Activated CD4-positive, alpha-beta T cell treated with anti-CD3 and anti-CD28 coated beads for 36 hours (primary cell): ENCODE measurements at regions of chr3 and their contacts with region 1.

Region 1: GRCh38 chr3:49856181-49857005 is at the start of gene TRAIP:
- DNase-seq: peak; percentile 97
- ATAC-seq: peak; percentile 99
- H3K4me3 Mint-ChIP-seq: peak within 1 kb of the TSS; percentile 97
- H3K27ac Mint-ChIP-seq: peak within 1 kb of the TSS; percentile 81
- H3K4me1 Mint-ChIP-seq: peaks cover 10% of the 10 kb centered on the region
- H3K27me3 Mint-ChIP-seq: no peaks in the 10 kb centered on the region
- total RNA-seq, gene TRAIP: 25.1 to 28.1 TPM

Region 2: DNA sequence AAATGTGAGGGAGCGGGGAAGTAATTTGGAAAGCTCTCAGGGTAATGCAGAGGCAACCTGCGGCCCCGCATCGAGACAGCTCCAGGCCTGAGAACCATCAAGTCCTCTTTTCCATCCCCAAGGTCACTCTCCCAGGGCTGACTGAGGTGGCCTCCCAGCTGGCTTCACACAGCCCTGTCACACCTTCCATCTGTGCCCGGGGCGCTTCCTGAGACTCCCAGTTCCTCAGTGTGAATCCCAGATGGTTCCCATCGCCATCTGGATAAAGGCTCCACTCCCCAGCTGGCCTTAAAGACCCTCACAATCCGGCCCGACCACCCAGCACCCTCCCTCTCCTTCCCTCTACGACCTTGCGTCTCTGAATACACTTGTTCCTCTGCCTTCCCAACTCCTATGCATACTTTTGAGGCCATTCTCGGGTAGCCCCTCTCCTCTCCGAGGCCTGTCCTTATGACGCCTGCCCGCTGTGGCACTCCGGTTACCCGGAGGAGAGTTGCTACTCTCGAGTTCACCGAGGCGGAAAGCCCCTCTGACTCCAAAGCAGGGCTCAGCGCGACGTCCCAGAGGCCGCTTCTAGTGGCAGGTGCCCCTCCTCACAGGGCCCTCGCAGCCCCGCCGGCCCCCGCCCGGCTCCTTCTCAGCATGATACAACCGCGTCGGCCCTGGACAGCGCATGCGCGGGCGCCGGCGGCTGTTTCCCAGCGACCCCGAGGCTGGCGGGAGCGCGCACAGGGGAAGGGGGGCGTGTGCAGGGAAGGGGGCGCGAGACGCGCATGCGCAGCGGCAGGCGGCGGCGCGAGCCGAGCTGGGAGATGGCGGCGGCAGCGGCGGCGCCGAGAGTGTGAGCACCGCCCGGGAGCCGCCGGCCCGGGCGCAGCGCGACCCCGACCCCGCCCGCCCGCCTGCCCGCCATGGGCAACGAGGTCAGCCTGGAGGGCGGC is 302.4 kb before region 1 on chr3 and contains the start of gene BSN:
- CTCF ChIA-PET with region 1: no interaction called
- POLR2A ChIA-PET with region 1: no interaction called
- intact Hi-C with region 1: loop called in 1 of 2 experiments (anchors 1 kb)
- DNase-seq: peak; percentile 95
- ATAC-seq: peak; percentile 92
- H3K4me3 Mint-ChIP-seq: peak within 1 kb of the TSS; percentile 72
- H3K27ac Mint-ChIP-seq: peak within 1 kb of the TSS; percentile 24
- H3K4me1 Mint-ChIP-seq: peaks cover 11% of the 10 kb centered on the region
- H3K27me3 Mint-ChIP-seq: peaks cover 34% of the 10 kb centered on the region
- total RNA-seq, gene BSN: 0.09 to 0.11 TPM

Region 3: GRCh38 chr3:49786241-49786958 is 70.0 kb before region 1 on chr3 and contains the start of gene IP6K1:
- CTCF ChIA-PET with region 1: no interaction called
- POLR2A ChIA-PET with region 1: no interaction called
- intact Hi-C with region 1: loop called (anchors 1 to 5 kb)
- DNase-seq: peak; percentile 100
- ATAC-seq: peak; percentile 100
- H3K4me3 Mint-ChIP-seq: peak within 1 kb of the TSS; percentile 90
- H3K27ac Mint-ChIP-seq: peak within 1 kb of the TSS; percentile 96
- H3K4me1 Mint-ChIP-seq: peaks cover 37% of the 10 kb centered on the region
- H3K27me3 Mint-ChIP-seq: no peaks in the 10 kb centered on the region
- total RNA-seq, gene IP6K1: 29.1 to 31.0 TPM

Region 4: DNA sequence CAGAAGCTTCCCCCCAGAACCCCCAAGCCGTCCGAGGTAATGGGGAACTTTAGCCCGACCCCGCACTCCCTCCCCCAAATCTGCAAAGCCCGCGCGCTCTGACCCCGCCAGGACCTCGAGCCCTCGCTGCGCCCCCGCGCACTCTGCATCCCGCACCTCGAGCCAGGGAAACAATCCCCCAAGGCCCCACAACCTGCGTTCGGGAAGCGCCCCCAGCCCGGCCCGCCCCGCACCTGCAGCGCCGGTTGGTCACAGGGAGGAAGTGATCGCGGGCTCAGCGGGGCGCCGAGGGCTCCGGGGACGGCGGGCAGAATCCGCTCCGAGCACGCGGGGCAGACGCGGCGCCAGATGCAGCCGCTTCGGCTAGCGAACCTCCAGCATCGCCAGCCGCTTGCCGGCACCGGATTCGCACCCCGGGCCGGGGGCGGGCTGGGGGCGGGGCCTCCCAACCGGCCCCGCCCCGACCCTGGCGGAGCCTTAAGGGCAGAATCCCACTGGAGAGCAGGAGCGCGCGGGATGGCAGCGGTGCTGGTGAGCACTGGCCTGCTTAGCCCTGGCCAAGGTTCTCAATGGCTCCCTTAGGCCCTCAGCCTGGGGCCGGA is 13.2 kb after region 1 on chr3 and contains the start of gene CAMKV:
- CTCF ChIA-PET with region 1: no interaction called
- POLR2A ChIA-PET with region 1: no interaction called
- intact Hi-C with region 1: loop called in 1 of 2 experiments (anchors 1 kb)
- DNase-seq: peak; percentile 61
- ATAC-seq: peak; percentile 59
- H3K4me3 Mint-ChIP-seq: no peak within 1 kb of the TSS
- H3K27ac Mint-ChIP-seq: no peak within 1 kb of the TSS
- H3K4me1 Mint-ChIP-seq: no peaks in the 10 kb centered on the region
- H3K27me3 Mint-ChIP-seq: peaks cover 29% of the 10 kb centered on the region
- total RNA-seq, gene CAMKV: 1.1 to 1.3 TPM

Region 5: DNA sequence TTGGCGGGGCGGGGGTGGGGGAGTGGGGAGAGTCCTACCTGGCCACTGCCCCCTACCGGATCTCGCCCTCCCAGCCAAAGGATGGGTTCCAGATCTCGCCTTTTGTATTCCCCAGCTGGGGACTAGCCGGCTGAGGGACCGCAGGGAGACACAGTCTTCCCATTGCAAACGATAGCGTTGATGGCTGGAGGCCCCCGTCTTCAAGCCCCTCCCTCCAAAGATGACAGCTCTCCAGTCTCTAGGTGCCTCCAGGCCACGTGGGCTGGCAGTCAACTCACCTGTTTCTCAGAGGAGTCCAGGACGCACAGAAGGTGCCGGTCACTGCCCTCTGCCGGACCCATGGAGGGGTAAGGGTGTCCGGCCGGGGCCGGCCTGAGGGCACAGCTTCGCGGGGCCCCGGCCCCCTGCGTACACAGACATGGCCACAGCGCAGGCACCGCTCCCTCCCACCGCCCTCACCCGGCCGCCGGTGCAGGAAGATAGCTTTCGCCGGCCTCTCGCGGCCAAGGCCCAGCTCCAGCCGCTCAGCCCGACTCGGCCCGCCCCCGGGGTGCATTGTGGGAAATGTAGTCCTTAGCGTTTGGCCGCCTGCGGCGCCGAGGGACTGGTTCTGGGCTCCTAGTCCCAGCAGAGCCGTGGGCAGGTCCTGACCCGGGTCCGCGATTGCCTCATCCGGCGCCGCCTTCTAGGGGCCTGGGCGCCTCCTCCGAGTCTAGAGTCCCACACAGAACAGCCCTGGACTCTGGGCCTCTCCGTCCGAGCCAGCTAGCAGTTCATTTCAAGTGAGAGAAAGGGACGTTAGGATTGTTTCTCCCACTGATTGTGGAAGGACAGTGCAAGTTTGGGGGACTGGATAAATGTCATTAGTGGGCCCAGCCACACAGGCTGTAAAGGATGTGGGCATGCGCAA is 73.2 kb after region 1 on chr3 and contains the start of gene MON1A:
- CTCF ChIA-PET with region 1: no interaction called
- POLR2A ChIA-PET with region 1: no interaction called
- intact Hi-C with region 1: loop called in 1 of 2 experiments (anchors 1 kb)
- DNase-seq: peak; percentile 92
- ATAC-seq: peak; percentile 97
- H3K4me3 Mint-ChIP-seq: peak within 1 kb of the TSS; percentile 85
- H3K27ac Mint-ChIP-seq: peak within 1 kb of the TSS; percentile 90
- H3K4me1 Mint-ChIP-seq: peaks cover 19% of the 10 kb centered on the region
- H3K27me3 Mint-ChIP-seq: no peaks in the 10 kb centered on the region
- total RNA-seq, gene MON1A: 7.5 to 8.3 TPM

Region 6: GRCh38 chr3:50088725-50089608 is 232.6 kb after region 1 on chr3 and contains the start of gene RBM5:
- CTCF ChIA-PET with region 1: no interaction called
- POLR2A ChIA-PET with region 1: no interaction called
- intact Hi-C with region 1: loop called in 1 of 2 experiments (anchors 1 kb)
- DNase-seq: peak; percentile 97
- ATAC-seq: peak; percentile 100
- H3K4me3 Mint-ChIP-seq: peak within 1 kb of the TSS; percentile 99
- H3K27ac Mint-ChIP-seq: peak within 1 kb of the TSS; percentile 97
- H3K4me1 Mint-ChIP-seq: peaks cover 28% of the 10 kb centered on the region
- H3K27me3 Mint-ChIP-seq: no peaks in the 10 kb centered on the region
- total RNA-seq, gene RBM5: 118 to 131 TPM